ENCODE measurements at regions of chr3 and their contacts with region 1.

Region 1: DNA sequence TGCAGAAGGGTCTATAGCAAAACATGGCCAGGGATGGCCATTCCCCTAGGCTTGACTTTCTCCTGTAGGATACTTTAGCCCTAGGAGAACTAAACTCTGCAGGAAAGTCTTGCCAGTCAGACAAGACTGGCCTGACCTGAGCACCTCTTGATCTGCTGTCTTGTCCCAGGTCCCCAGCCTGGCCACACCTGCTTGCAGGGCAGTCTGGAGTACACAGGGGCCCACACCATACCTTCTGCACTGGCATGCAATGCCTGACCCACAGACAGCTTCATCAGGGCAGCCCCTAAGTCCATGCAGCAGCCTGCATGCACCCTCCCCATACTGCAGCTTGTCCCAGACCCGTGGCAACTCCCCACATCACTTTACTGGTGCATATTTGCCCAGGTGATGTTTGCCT is 204.6 kb downstream of the LRRC3B start:
- DNase-seq: no peak
- H3K4me3 ChIP-seq: no peak overlapping the region
- H3K27ac ChIP-seq: no peak overlapping the region
- H3K4me1 ChIP-seq: no peaks in the 10 kb centered on the region
- H3K27me3 ChIP-seq: no peaks in the 10 kb centered on the region
- CTCF ChIP-seq: no peak
- POLR2A ChIP-seq: no peak

Region 2: DNA sequence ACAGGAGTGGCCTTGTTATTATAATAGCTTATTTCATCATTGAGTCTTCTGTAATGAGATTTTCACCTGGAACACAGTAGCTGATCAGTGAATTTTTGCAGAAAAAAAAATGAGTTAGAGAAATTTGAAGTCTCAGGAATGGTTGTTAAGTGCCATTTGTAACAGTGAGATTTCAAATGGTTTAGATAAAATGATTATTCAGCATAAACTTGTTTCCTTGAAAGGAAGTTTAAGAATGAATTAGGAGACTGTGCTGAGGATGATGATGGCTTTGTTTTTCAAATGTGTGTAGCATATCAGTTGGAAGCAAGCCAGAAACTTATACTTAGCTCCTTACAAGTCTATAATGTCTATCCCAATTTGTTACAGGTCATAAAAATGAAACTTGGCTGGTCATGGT is 20.5 kb after region 1 on chr3:
- intact Hi-C with region 1: loop called (anchors 1 kb)
- DNase-seq: no peak
- H3K4me3 ChIP-seq: no peak overlapping the region
- H3K27ac ChIP-seq: no peak overlapping the region
- H3K4me1 ChIP-seq: no peaks in the 10 kb centered on the region
- H3K27me3 ChIP-seq: no peaks in the 10 kb centered on the region
- CTCF ChIP-seq: no peak
- POLR2A ChIP-seq: no peak

Measured in uterus (tissue), 4 donors.